H1 (cell line): ENCODE measurements at regions of chr10 and their contacts with region 1.

Region 1: GRCh38 chr10:79405221-79405994 is 40.0 kb downstream of the ZCCHC24 start:
- DNase-seq: no peak
- H3K4me3 ChIP-seq: no peak overlapping the region
- H3K27ac ChIP-seq: no peak overlapping the region
- H3K4me1 ChIP-seq: peaks cover 0 to 22% (median 11%) of the 10 kb centered on the region in 4 experiments; a peak in 6 of 7 replicates
- H3K27me3 ChIP-seq: no peaks in the 10 kb centered on the region; a peak in 1 of 7 replicates
- CTCF ChIP-seq: no peak
- EP300 ChIP-seq: no peak
- POLR2A ChIP-seq: no peak
- RAD21 ChIP-seq: no peak

Region 2: GRCh38 chr10:79274279-79275104 is 130.9 kb before region 1 on chr10:
- CTCF ChIA-PET with region 1: no interaction called
- POLR2A ChIA-PET with region 1: no interaction called
- DNase-seq: no peak
- H3K4me3 ChIP-seq: no peak overlapping the region
- H3K27ac ChIP-seq: no peak overlapping the region
- H3K4me1 ChIP-seq: no peaks in the 10 kb centered on the region; a peak in 3 of 7 replicates
- H3K27me3 ChIP-seq: no peaks in the 10 kb centered on the region
- CTCF ChIP-seq: no peak
- EP300 ChIP-seq: no peak
- POLR2A ChIP-seq: no peak
- RAD21 ChIP-seq: no peak

Region 3: GRCh38 chr10:79445141-79445976 is 40.0 kb after region 1 on chr10 and contains the start of gene ZCCHC24:
- CTCF ChIA-PET with region 1: interaction called, 11 read pairs
- POLR2A ChIA-PET with region 1: interaction called, 6 read pairs
- DNase-seq: peak; percentile 92 to 94
- H3K4me3 ChIP-seq: peak within 1 kb of the TSS; percentile 49 to 68 (median 60)
- H3K27ac ChIP-seq: no peak within 1 kb of the TSS
- H3K4me1 ChIP-seq: peaks cover 6 to 21% (median 10%) of the 10 kb centered on the region in 4 experiments; a peak in 5 of 7 replicates
- H3K27me3 ChIP-seq: peaks cover 0 to 44% (median 30%) of the 10 kb centered on the region in 4 experiments; a peak in 6 of 7 replicates
- CTCF ChIP-seq: no peak
- EP300 ChIP-seq: no peak
- POLR2A ChIP-seq: peak in 1 of 2 experiments; percentile 70; a peak in 2 of 3 replicates
- RAD21 ChIP-seq: no peak
- total RNA-seq, gene ZCCHC24: 6.2 and 6.9 TPM in 2 replicates

Region 4: GRCh38 chr10:79628988-79629954 is 223.9 kb after region 1 on chr10:
- CTCF ChIA-PET with region 1: no interaction called
- POLR2A ChIA-PET with region 1: no interaction called
- DNase-seq: no peak
- H3K4me3 ChIP-seq: no peak overlapping the region
- H3K27ac ChIP-seq: no peak overlapping the region
- H3K4me1 ChIP-seq: no peaks in the 10 kb centered on the region
- H3K27me3 ChIP-seq: no peaks in the 10 kb centered on the region
- CTCF ChIP-seq: no peak
- EP300 ChIP-seq: no peak
- POLR2A ChIP-seq: no peak
- RAD21 ChIP-seq: no peak